HEK293 (cell line): ENCODE measurements at regions of chr6 and their contacts with region 1.

Region 1: GRCh38 chr6:79949233-79949632 is 1.9 kb upstream of the ELOVL4 start:
- H3K4me3 ChIP-seq: peak overlapping the region; percentile 23; the same call in 1 of the 2 replicates
- H3K27ac ChIP-seq: no peak overlapping the region
- H3K4me1 ChIP-seq: peaks cover 7% of the 10 kb centered on the region; the same call in 1 of the 2 replicates
- CTCF ChIP-seq: peak; percentile 58; the same call in 1 of the 2 replicates

Region 2: GRCh38 chr6:79928478-79928998 is 20.7 kb before region 1 on chr6:
- CTCF ChIA-PET with region 1: interaction called, 19 read pairs
- POLR2A ChIA-PET with region 1: interaction called, 6 read pairs
- H3K4me3 ChIP-seq: no peak overlapping the region
- H3K27ac ChIP-seq: no peak overlapping the region
- H3K4me1 ChIP-seq: peaks cover 19% of the 10 kb centered on the region
- CTCF ChIP-seq: no peak

Region 3: DNA sequence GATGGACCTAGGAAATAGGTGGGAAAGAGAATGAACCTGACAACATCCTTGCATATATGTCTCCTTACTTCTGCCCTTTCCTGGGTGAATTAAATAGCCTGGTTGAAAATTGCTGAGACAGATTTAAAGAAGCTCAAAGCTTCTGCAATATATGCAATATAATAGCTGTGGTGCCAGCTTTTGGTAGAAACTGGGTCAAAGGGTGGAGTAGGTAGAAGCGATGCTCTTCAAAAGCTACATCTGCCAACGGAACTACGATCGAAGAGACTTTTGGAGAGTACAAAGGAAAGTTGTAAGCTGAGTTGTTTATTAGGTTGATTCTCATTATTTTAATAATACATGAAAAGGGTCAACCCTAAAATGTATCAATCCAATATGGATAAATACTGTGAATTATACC is 32.4 kb after region 1 on chr6:
- CTCF ChIA-PET with region 1: interaction called, 13 read pairs
- POLR2A ChIA-PET with region 1: interaction called, 3 read pairs
- H3K4me3 ChIP-seq: no peak overlapping the region
- H3K27ac ChIP-seq: no peak overlapping the region
- H3K4me1 ChIP-seq: no peaks in the 10 kb centered on the region
- CTCF ChIP-seq: no peak

Region 4: DNA sequence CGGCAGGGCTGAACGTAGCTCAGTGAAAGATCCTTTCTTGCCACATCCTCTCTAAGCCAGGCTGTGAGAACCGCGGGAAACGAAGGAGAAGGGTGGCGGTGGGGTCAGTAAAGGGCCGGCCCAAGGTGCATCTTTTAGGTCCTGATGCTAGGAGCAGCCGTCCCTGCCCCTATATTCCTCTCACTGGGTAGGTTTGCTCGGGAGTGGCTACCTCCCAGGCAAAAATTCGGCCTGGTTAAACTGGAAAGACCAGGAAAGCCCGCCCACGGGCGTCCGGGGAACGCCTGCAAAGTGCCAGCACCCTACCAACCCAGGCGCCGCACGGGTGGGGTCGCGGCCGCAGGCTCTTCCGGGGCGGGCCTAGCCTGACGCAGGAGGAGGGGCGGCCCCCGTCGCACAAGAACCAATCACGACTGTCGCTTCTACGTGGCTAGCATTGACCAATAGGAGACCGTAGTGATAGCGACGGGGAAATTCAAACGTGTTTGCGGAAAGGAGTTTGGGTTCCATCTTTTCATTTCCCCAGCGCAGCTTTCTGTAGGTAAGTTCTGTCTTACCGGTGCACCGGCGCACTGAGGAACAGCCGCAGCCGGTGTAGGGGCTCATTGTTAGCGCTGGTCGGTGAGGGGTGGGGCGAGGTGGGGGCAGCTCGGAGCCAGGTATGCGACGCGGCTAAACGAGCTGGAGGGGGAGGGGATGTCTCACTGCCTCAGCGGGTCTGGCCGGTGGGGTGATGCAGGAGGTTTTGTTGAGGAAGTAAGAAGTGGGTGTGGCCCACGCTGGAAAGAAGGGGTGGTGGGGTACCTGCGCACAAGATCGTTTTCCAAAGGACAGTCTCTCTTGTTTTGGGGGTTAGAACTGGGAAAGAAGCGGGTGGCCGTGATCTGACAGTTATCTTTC is 55.2 kb after region 1 on chr6 and contains the start of gene TTK:
- CTCF ChIA-PET with region 1: interaction called, 11 read pairs
- POLR2A ChIA-PET with region 1: interaction called, 16 read pairs
- H3K4me3 ChIP-seq: peak within 1 kb of the TSS; percentile 78
- H3K27ac ChIP-seq: peak within 1 kb of the TSS; percentile 54
- H3K4me1 ChIP-seq: no peaks in the 10 kb centered on the region
- CTCF ChIP-seq: no peak

Region 5: DNA sequence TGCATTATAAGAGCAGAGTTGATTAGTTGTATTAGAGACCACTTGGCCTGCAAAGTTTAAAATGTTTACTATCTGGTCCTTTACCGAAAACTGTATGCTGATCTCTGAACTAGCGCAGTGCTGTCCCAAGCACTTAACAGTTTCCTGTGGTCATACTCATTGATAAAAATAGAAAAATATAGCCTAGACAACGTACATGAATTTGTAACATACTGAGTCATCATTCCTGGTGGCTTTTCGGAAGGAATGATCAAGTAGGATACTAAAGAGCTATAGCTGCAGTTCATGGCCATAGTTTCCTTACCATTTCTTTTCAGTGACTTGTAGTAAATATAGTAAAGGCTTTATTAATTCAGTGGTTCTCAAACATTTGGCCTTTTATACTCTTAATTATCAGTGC is 73.6 kb after region 1 on chr6:
- CTCF ChIA-PET with region 1: interaction called, 11 read pairs
- POLR2A ChIA-PET with region 1: no interaction called
- H3K4me3 ChIP-seq: no peak overlapping the region
- H3K27ac ChIP-seq: no peak overlapping the region
- H3K4me1 ChIP-seq: no peaks in the 10 kb centered on the region
- CTCF ChIP-seq: no peak

Region 6: GRCh38 chr6:80106418-80107235 is 157.4 kb after region 1 on chr6 and contains the start of gene BCKDHB:
- CTCF ChIA-PET with region 1: interaction called, 11 read pairs
- POLR2A ChIA-PET with region 1: interaction called, 11 read pairs
- H3K4me3 ChIP-seq: peak within 1 kb of the TSS; percentile 88
- H3K27ac ChIP-seq: no peak within 1 kb of the TSS; the same call in 1 of the 2 replicates
- H3K4me1 ChIP-seq: peaks cover 2% of the 10 kb centered on the region; the same call in 1 of the 2 replicates
- CTCF ChIP-seq: peak; percentile 15; the same call in 1 of the 2 replicates